ENCODE measurements at regions of chr15 and their contacts with region 1.

Region 1: DNA sequence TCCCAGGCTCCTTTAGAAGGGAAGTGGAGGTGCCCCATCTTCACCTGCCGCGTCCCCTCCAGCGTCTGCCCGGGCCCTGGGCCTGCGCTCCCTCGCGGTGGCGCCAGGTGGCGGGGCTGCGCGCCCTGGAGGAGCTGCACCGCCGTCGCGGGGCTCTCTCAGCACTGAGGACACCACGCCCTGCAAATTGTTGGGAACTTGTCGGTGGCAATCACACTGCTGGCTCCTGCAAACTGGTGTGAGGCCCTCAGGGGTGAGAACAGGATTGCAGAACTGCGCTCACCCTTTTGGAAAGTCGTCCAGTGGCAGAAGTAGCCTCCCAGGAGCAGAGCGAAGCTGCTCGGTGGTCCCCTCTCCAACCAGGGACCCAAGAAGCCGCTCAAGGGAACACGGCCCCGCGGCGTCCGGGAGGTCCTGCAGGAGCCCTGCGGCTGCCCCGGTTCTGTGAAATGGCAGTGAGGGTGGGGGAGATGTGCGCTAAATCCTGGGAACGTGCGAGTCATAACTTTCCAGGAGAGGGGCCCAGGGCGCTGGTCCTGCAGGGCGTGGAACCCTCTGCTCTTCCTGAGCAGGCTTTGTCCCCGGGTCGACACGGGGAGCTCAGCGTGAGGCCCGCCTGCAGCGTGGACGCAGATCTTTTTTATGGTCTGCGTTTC is 995 bp upstream of the LRRK1 start:
- DNase-seq: no peak
- H3K4me3 ChIP-seq: peak overlapping the region; percentile 69
- CTCF ChIP-seq: peak; percentile 96

Region 2: GRCh38 chr15:100635406-100636071 is 282.6 kb before region 1 on chr15:
- CTCF ChIA-PET with region 1: interaction called, 10 read pairs
- POLR2A ChIA-PET with region 1: interaction called, 3 read pairs
- DNase-seq: no peak
- H3K4me3 ChIP-seq: no peak overlapping the region
- CTCF ChIP-seq: no peak

Region 3: GRCh38 chr15:100879464-100880138 is 38.6 kb before region 1 on chr15 and contains the start of gene ALDH1A3:
- CTCF ChIA-PET with region 1: interaction called, 12 read pairs
- POLR2A ChIA-PET with region 1: no interaction called
- DNase-seq: no peak
- H3K4me3 ChIP-seq: peak within 1 kb of the TSS; percentile 50
- CTCF ChIP-seq: no peak

Region 4: DNA sequence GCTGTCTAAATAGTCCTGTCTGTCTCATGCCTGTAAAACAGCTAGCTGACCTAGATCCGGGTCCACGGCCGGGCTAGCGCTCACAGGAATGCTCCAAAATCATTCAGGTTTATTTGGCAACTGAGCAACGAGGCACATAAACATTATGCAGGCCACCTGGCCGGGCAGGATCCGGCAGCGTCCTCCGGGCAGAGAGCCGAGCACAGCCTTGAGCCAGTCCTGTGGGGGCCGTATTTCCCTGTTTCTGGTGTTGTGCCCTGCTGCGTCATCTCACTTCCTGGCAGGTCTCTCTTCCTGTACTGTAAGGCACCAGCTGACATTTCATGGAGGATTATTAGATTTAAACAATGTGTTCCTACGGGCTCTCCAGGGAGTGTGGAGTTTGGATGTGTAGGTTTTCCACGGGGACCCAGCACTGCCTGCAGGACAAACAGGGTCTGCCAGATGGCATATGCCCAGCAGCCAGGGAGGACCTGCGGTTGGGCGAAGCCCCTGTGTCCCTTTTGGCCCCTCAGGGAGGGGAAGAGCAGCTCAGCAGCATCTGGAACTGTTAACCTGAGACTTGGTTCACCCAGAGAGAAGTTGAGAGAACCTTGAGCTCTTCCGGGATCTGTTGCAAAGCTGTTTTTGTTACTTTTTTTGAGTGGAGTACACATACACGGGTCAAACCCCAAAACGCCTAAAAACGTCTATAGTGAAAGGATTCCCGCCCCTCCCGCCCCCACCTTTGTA is 15.6 kb before region 1 on chr15:
- CTCF ChIA-PET with region 1: interaction called, 94 read pairs
- POLR2A ChIA-PET with region 1: no interaction called
- DNase-seq: peak; percentile 37
- H3K4me3 ChIP-seq: no peak overlapping the region; the same call in 1 of the 2 replicates
- CTCF ChIP-seq: no peak

Region 5: GRCh38 chr15:100941536-100941935 is 23.4 kb after region 1 on chr15:
- CTCF ChIA-PET with region 1: interaction called, 33 read pairs
- POLR2A ChIA-PET with region 1: no interaction called
- DNase-seq: no peak
- H3K4me3 ChIP-seq: no peak overlapping the region
- CTCF ChIP-seq: no peak

Region 6: DNA sequence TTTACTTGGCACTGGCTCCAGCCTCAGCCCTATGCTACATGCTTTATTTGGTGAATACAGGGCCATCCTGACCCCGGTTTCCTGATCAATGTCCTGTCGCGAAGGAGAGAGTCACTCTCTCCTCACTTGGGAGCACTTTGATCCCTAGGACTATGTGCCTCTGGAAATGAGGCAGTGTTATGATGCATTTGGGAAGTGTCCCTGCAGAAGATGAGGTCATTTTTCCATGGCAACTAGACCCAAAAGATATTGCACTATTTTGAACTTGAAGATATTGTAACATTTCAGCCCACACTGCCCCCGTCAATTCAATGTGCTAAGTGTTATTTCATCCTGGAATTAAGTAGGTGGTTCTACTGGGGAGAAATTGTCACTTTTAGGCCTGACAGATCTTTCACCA is 69.0 kb after region 1 on chr15:
- CTCF ChIA-PET with region 1: interaction called, 31 read pairs
- POLR2A ChIA-PET with region 1: no interaction called
- DNase-seq: no peak
- H3K4me3 ChIP-seq: no peak overlapping the region
- CTCF ChIP-seq: no peak

Measured in AG04449 (cell line).